A549 (cell line): ENCODE measurements at regions of chr11 and their contacts with region 1.

Region 1: GRCh38 chr11:2532704-2533586 is 88.1 kb downstream of the KCNQ1 start:
- DNase-seq: peak; percentile 83 to 95
- ATAC-seq: peak; percentile 77 to 92
- H3K4me3 ChIP-seq: no peak overlapping the region
- H3K27ac ChIP-seq: no peak overlapping the region
- H3K4me1 ChIP-seq: no peaks in the 10 kb centered on the region
- CTCF ChIP-seq: peak; percentile 99
- EP300 ChIP-seq: no peak
- POLR2A ChIP-seq: no peak
- RAD21 ChIP-seq: peak; percentile 99 to 100

Region 2: GRCh38 chr11:2196970-2197770 is 335.8 kb before region 1 on chr11:
- CTCF ChIA-PET with region 1: interaction called, 28 read pairs
- POLR2A ChIA-PET with region 1: no interaction called
- DNase-seq: peak; percentile 75 to 80
- ATAC-seq: peak; percentile 72 to 92
- H3K4me3 ChIP-seq: no peak overlapping the region
- H3K27ac ChIP-seq: no peak overlapping the region
- H3K4me1 ChIP-seq: no peaks in the 10 kb centered on the region
- CTCF ChIP-seq: peak; percentile 82
- EP300 ChIP-seq: no peak
- POLR2A ChIP-seq: no peak
- RAD21 ChIP-seq: peak; percentile 94

Region 3: GRCh38 chr11:2366261-2366660 is 166.7 kb before region 1 on chr11:
- CTCF ChIA-PET with region 1: no interaction called
- POLR2A ChIA-PET with region 1: no interaction called
- DNase-seq: no peak
- ATAC-seq: no peak
- H3K4me3 ChIP-seq: no peak overlapping the region
- H3K27ac ChIP-seq: no peak overlapping the region
- H3K4me1 ChIP-seq: no peaks in the 10 kb centered on the region
- CTCF ChIP-seq: no peak
- EP300 ChIP-seq: no peak
- POLR2A ChIP-seq: no peak
- RAD21 ChIP-seq: no peak

Region 4: GRCh38 chr11:2409611-2410468 is 123.1 kb before region 1 on chr11:
- CTCF ChIA-PET with region 1: interaction called, 10 read pairs
- POLR2A ChIA-PET with region 1: no interaction called
- DNase-seq: no peak
- ATAC-seq: no peak
- H3K4me3 ChIP-seq: no peak overlapping the region
- H3K27ac ChIP-seq: no peak overlapping the region
- H3K4me1 ChIP-seq: no peaks in the 10 kb centered on the region
- CTCF ChIP-seq: no peak
- EP300 ChIP-seq: no peak
- POLR2A ChIP-seq: no peak
- RAD21 ChIP-seq: no peak

Region 5: GRCh38 chr11:2483426-2483825 is 49.5 kb before region 1 on chr11:
- CTCF ChIA-PET with region 1: interaction called, 23 read pairs
- POLR2A ChIA-PET with region 1: no interaction called
- DNase-seq: no peak
- ATAC-seq: no peak
- H3K4me3 ChIP-seq: no peak overlapping the region
- H3K27ac ChIP-seq: no peak overlapping the region
- H3K4me1 ChIP-seq: no peaks in the 10 kb centered on the region
- CTCF ChIP-seq: no peak
- EP300 ChIP-seq: no peak
- POLR2A ChIP-seq: no peak
- RAD21 ChIP-seq: no peak

Region 6: GRCh38 chr11:2561696-2562581 is 29.0 kb after region 1 on chr11:
- CTCF ChIA-PET with region 1: interaction called, 32 read pairs
- POLR2A ChIA-PET with region 1: no interaction called
- DNase-seq: no peak
- ATAC-seq: no peak; a peak in 1 of 6 replicates
- H3K4me3 ChIP-seq: no peak overlapping the region
- H3K27ac ChIP-seq: no peak overlapping the region
- H3K4me1 ChIP-seq: no peaks in the 10 kb centered on the region
- CTCF ChIP-seq: no peak
- EP300 ChIP-seq: no peak
- POLR2A ChIP-seq: no peak
- RAD21 ChIP-seq: no peak

Region 7: DNA sequence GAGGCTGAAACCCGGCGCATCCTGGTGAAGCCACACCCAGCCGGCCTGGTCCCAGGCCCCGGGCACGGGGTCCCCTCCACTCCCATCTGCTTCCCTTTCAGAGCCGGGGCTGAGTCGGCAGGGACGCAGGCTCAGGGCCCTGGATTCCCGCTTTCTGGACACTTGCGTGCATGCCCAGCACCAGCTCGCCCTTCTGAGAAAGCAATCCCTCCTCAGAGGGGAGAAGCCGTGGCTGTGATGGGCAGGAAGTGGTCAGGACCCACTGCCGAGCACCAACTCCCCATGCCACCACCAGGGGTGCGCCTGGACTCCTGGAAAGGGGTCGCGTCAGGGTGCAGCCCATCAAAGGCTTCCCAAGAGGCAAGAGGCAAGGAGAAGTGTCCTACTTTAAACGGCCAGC is 337.5 kb after region 1 on chr11:
- CTCF ChIA-PET with region 1: interaction called, 12 read pairs
- POLR2A ChIA-PET with region 1: no interaction called
- DNase-seq: no peak
- ATAC-seq: peak; percentile 69 to 83; a peak in 5 of 6 replicates
- H3K4me3 ChIP-seq: no peak overlapping the region
- H3K27ac ChIP-seq: no peak overlapping the region
- H3K4me1 ChIP-seq: no peaks in the 10 kb centered on the region
- CTCF ChIP-seq: no peak
- EP300 ChIP-seq: no peak
- POLR2A ChIP-seq: no peak
- RAD21 ChIP-seq: no peak

Region 8: DNA sequence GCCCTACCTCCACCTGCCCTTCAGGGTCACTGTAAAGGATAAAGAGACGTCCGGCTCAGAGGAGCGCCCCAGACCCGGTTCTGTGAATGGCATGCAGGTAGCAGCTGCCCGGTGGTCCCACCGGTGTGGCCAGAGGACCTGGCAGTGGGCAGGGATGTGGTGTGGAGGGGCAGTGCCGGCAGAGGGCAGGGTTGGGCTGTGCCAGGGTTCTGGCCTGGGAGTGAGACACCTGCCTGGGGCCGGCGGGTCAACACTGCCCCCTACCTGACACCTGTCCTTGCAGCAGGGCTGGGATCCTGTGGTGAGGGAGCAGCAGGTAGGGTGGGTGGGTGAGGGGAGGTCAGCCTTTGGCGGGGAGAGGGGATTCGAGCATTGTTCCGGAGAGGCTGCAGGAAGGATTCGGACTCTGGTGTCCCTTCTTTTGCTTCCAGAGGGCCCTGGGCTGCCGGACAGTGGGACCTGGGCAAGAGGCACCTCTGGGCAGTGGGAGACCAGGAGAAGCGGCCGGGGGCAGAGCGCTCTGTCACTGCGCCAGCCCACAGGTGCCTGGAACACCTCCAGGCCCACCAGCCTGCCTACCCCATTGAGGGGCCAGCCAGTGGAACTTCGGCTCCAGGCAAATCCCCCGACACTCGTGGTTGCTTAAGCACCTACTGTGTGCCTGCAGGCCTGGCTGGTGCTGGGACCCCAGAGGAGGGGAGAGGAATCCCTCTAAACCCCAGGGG is 397.9 kb after region 1 on chr11:
- CTCF ChIA-PET with region 1: interaction called, 75 read pairs
- POLR2A ChIA-PET with region 1: interaction called, 19 read pairs
- DNase-seq: peak; percentile 86 to 90
- ATAC-seq: peak; percentile 45 to 78
- H3K4me3 ChIP-seq: peak overlapping the region; percentile 67
- H3K27ac ChIP-seq: peak overlapping the region; percentile 92 to 94
- H3K4me1 ChIP-seq: peaks cover 29% of the 10 kb centered on the region
- CTCF ChIP-seq: peak; percentile 98
- EP300 ChIP-seq: no peak
- POLR2A ChIP-seq: no peak
- RAD21 ChIP-seq: peak; percentile 94 to 96